WTC11 (cell line): ENCODE measurements at regions of chr13 and their contacts with region 1.

Region 1: GRCh38 chr13:101155920-101156319 is 260.4 kb downstream of the NALCN start:
- DNase-seq: no peak
- ATAC-seq: 0 out of 2 replicates have a peak, but pooled peaks have one; percentile 26
- H3K4me3 Mint-ChIP-seq: no peak overlapping the region
- H3K27ac Mint-ChIP-seq: no peak overlapping the region
- H3K4me1 Mint-ChIP-seq: peaks cover 6% of the 10 kb centered on the region; the same call in 1 of the 2 replicates
- H3K27me3 Mint-ChIP-seq: no peaks in the 10 kb centered on the region
- CTCF ChIP-seq: no peak; the same call in 1 of the 2 replicates

Region 2: DNA sequence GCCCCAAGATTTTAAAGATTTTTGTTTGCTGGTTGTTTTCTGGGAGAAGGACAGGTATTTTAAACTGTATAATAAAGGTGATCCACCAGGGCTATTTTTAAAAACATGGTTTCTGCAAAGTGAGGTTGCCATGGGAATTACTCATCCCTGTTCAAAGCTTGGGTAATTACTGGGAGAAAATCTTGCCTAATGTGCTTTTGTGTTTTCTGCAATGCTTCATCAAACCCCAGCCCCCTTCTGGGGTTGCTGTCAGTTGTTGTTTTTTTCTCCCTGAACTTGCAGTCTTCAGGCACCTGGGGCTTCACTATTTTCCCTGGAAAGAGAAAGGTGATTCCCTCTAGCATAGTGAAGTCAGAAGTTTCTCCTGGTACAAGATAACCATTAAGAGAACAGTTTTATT is 16.8 kb before region 1 on chr13:
- CTCF ChIA-PET with region 1: no interaction called
- POLR2A ChIA-PET with region 1: no interaction called
- DNase-seq: no peak
- ATAC-seq: no peak
- H3K4me3 Mint-ChIP-seq: no peak overlapping the region
- H3K27ac Mint-ChIP-seq: no peak overlapping the region
- H3K4me1 Mint-ChIP-seq: peaks cover 34% of the 10 kb centered on the region
- H3K27me3 Mint-ChIP-seq: no peaks in the 10 kb centered on the region
- CTCF ChIP-seq: no peak

Region 3: DNA sequence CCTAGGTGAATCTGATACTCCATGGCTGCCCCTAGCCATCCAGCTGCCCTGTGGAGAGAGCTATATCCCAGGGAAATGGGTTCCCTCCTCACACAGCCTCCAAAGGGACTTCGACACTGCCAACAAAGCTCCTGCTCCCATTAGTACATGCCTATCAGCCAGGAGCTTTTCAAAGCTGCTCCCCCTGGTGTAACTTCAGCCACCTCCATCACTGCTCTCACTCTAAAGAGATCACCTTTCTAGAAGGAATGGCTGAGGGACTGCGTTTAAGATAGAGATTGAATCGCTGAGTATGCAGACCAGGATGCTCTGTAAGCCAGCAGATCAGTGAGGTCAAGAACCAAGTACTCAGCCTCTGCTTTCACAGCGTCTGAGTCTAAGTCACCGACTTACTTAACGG is 46.7 kb after region 1 on chr13:
- CTCF ChIA-PET with region 1: interaction called, 12 read pairs
- POLR2A ChIA-PET with region 1: no interaction called
- DNase-seq: peak; percentile 42
- ATAC-seq: peak; percentile 100
- H3K4me3 Mint-ChIP-seq: no peak overlapping the region
- H3K27ac Mint-ChIP-seq: no peak overlapping the region; the same call in 1 of the 2 replicates
- H3K4me1 Mint-ChIP-seq: peaks cover 2% of the 10 kb centered on the region; the same call in 1 of the 2 replicates
- H3K27me3 Mint-ChIP-seq: no peaks in the 10 kb centered on the region; the same call in 1 of the 2 replicates
- CTCF ChIP-seq: no peak